Aorta (tissue), 5 donors: ENCODE measurements at regions of chr3 and their contacts with region 1.

Region 1: DNA sequence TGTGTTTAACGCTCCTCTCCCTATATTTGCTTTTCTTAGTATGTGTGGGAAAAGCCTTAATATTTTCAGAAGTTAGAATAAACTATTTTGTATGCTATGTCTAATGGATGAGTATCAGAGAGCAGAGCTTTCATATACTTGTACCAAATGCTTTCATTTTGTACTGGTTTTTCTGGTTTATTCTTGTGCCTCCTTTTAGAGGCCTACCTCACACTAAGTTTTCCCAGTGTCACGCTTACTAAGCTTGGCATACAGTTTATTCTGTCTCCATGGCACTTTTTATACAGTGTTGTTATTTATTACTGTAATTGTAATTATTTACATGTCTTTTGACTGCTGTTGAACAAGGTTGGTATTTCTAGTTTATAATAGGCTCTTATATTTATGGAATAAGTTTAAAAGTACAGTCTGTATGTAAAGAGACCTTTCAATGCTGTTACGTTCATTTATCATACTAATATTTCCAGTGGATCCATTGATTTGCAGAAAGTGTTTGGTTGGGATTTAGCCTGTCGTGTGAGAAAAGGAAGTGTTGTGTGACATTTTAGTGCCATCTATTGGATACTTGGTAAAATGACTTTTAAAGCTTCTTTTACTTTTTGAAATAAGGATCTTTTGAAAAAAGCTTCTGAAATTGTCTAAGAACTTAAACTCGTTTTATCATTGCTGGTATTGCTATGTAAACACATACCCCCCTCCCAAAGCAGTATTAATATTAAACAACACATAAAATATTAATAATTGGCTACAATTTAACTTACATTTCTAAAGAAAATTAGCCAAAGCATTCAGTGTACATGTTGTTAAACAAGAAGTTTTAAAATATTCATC is 5.2 kb upstream of the EBLN2 start:
- DNase-seq: no peak
- ATAC-seq: peak; percentile 70
- H3K4me3 ChIP-seq: no peak overlapping the region
- H3K27ac ChIP-seq: no peak overlapping the region
- H3K4me1 ChIP-seq: no peaks in the 10 kb centered on the region
- H3K27me3 ChIP-seq: no peaks in the 10 kb centered on the region

Region 2: GRCh38 chr3:72405943-72406566 is 650.2 kb before region 1 on chr3:
- intact Hi-C with region 1: loop called in 1 of 2 experiments (anchors 10 kb)
- DNase-seq: no peak
- ATAC-seq: no peak
- H3K4me3 ChIP-seq: no peak overlapping the region
- H3K27ac ChIP-seq: no peak overlapping the region
- H3K4me1 ChIP-seq: peaks cover 6 to 15% of the 10 kb centered on the region in 2 donors
- H3K27me3 ChIP-seq: no peaks in the 10 kb centered on the region

Region 3: GRCh38 chr3:72996473-72997333 is 59.5 kb before region 1 on chr3 and contains the start of gene PPP4R2:
- intact Hi-C with region 1: loop called in 1 of 2 experiments (anchors 10 kb)
- DNase-seq: peak; percentile 94 to 97
- ATAC-seq: peak; percentile 98
- H3K4me3 ChIP-seq: peak within 1 kb of the TSS; percentile 95 to 97
- H3K27ac ChIP-seq: peak within 1 kb of the TSS; percentile 53 to 89
- H3K4me1 ChIP-seq: peaks cover 0 to 2% of the 10 kb centered on the region in 2 donors
- H3K27me3 ChIP-seq: no peaks in the 10 kb centered on the region
- total RNA-seq, gene PPP4R2: 65.4 to 70.7 TPM